ENCODE measurements at regions of chr11 and their contacts with region 1.

Region 1: DNA sequence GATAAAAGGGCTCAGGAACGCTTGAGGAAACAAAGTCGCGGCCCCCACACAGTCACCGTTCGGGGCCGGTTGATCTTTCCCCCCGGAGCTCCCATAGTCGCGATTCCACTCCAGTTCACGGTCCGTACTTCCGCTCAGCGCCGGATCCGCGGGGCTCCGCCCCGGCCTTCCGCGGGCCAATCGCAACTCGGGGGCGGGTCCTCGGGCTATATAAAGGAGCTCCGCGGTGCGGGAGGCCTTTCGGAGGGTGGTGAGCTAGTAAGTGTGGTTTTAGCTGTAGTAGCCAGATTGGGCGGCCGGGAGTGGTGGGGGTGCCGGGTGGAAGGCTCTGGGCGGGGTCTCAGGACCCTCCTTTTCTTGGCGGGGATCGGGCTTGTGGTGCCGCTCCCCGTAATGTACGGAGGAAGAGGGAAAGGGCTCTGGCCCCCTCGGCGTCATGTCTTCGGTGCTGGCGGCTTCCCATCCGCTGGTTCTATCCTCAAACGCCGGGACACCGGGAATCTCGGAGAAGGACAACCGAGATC is at the starts of genes C11orf98 and CSKMT:
- DNase-seq: peak; percentile 96
- CTCF ChIP-seq: no peak

Region 2: DNA sequence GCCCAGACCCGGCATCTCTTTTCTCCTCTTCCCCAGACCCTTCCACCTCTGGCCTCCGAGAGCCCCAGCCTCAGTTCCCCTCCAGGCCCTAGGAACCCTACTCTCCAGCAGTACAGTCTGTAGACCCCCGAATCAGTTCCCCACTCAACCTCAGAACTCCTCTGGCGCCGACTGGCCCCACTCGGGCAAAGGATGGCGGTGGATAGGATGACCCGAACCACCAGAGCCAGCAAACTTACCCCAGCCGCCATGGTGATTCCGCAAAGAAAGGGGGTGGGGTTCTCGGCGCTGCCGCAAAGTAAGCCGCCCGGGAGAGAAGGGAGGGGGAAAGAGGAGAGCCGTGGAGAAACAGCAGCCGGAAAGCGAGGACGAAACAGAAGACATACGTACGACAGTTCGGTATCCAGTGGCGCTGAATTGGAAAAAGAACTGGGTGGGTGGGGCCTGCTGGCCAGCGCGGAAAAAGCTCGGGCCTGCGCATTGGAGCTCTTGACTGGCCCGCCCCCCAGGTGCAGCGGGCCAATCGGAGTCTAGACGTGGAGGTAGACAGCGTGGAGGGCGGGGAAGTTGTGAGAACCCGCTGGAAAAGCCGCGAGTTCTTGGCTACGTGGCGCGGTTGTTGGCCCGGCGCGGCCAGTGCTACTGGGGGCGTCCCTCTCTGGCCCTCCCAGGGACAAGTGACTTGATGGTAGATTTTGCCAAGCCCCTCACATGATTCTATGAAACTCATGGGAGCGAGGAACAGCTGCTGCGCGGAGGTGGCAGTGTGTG is 91.4 kb before region 1 on chr11 and contains the start of gene EEF1G:
- CTCF ChIA-PET with region 1: no interaction called
- POLR2A ChIA-PET with region 1: interaction called, 24 read pairs
- DNase-seq: peak; percentile 99
- CTCF ChIP-seq: no peak

Region 3: GRCh38 chr11:62621567-62622470 is 43.3 kb before region 1 on chr11 and contains the start of gene B3GAT3:
- CTCF ChIA-PET with region 1: interaction called, 9 read pairs
- POLR2A ChIA-PET with region 1: interaction called, 23 read pairs
- DNase-seq: peak; percentile 98
- CTCF ChIP-seq: no peak

Region 4: GRCh38 chr11:62652161-62653006 is 12.8 kb before region 1 on chr11:
- CTCF ChIA-PET with region 1: interaction called, 8 read pairs
- POLR2A ChIA-PET with region 1: interaction called, 83 read pairs
- DNase-seq: no peak
- CTCF ChIP-seq: no peak

Region 5: GRCh38 chr11:62705880-62706849 is 41.0 kb after region 1 on chr11:
- CTCF ChIA-PET with region 1: interaction called, 4 read pairs
- POLR2A ChIA-PET with region 1: interaction called, 18 read pairs
- DNase-seq: peak; percentile 96
- CTCF ChIP-seq: no peak

Region 6: GRCh38 chr11:62753736-62754603 is 88.8 kb after region 1 on chr11 and contains the start of gene ZBTB3:
- CTCF ChIA-PET with region 1: interaction called, 3 read pairs
- POLR2A ChIA-PET with region 1: interaction called, 27 read pairs
- DNase-seq: peak; percentile 96
- CTCF ChIP-seq: no peak

Region 7: GRCh38 chr11:62855571-62856332 is 190.6 kb after region 1 on chr11:
- CTCF ChIA-PET with region 1: interaction called, 3 read pairs
- POLR2A ChIA-PET with region 1: interaction called, 21 read pairs
- DNase-seq: peak; percentile 96
- CTCF ChIP-seq: no peak